ENCODE measurements at regions of chr11 and their contacts with region 1.

Region 1: GRCh38 chr11:111676878-111677585 is 74.8 kb downstream of the SIK2 start:
- DNase-seq: no peak
- ATAC-seq: peak; percentile 40

Region 2: GRCh38 chr11:111631666-111632039 is 45.4 kb before region 1 on chr11:
- intact Hi-C with region 1: loop called (anchors 5 kb)
- DNase-seq: no peak
- ATAC-seq: no peak

Region 3: DNA sequence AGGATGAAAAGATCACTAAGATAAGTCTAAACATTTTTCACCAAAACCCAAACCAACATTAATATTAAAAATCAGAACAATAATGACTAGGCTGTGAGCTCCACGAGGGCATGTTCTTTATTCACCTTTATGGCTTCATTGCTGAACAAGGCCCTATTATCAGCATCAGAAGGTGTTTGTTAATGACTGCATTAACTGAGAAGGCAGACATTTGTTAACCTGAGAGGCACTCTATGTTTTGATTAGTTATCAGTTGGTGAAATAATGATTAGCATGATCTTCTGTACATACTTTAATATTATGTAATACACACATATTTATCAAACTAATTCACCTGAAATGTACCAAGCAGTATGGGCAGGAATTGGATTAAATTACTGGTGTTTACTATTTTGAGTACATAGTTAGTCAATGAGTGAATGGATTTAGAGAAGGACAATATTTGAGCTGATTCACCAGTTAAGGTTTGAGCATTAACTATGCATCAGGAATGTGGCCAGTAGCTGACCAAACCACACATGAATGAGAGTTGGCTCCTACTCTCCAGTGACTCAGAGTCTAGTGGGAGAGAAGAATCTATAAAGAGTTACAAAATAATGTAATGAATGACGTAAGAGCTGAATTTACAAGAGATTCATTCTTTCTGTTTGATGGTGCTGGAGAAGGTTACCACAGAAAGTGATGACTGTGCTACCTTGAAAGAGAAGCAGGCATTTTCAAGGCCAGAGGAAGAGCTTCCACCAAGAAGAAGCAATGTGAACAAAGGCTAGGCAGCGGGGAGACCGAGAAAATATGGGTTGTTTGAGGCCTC is 480.1 kb after region 1 on chr11:
- intact Hi-C with region 1: no loop called
- DNase-seq: no peak
- ATAC-seq: peak; percentile 51